ENCODE measurements at regions of chr7 and their contacts with region 1.

Region 1: DNA sequence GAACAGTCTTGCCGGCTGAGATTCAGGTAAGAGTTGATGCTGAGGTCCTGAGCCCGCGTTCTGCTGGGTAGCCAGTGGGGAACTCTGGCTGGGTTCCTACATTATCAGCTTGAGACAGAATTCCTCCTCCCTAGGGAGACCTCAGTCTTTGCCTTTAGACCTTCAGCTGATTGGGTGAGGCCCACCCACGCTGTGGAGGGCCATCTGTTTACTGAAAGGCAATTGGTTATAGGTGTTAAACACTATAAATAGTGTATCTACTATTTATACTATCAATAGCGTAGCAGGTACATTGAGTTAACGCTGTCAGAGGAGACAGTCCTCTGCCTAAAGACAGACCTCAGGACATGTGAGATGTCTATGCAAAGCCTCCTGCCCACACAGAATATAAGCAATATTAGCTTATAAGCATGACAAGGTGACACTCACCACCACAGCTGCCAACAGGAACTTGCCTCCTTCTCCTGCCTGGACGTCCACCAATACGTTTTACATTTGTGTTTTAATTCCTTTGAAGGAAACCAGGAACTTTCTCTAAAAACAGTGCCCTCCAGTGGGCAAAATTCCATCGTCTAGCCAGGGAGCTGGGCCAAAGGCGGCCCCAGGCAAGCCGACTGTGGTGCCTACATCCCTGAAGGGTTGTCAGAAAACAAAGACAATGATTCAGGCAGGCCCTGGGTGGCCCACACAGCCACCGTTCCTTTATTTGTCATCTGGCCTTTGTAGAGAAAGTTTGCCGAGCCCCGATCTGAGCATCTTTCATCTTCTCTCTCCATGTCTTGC is 58.8 kb downstream of the INSIG1 start:
- DNase-seq: peak in 1 of 2 donors; percentile 51
- H3K4me3 ChIP-seq: no peak overlapping the region
- H3K27ac ChIP-seq: no peak overlapping the region
- H3K4me1 ChIP-seq: no peaks in the 10 kb centered on the region
- H3K27me3 ChIP-seq: peaks cover 0 to 81% of the 10 kb centered on the region in 2 donors
- CTCF ChIP-seq: no peak
- POLR2A ChIP-seq: no peak

Region 2: GRCh38 chr7:154927624-154928143 is 428.8 kb before region 1 on chr7:
- intact Hi-C with region 1: loop called (anchors 10 kb)
- DNase-seq: peak in 1 of 2 donors; percentile 84
- H3K4me3 ChIP-seq: peak overlapping the region; percentile 60 to 79 (median 65)
- H3K27ac ChIP-seq: peak overlapping the region; percentile 95
- H3K4me1 ChIP-seq: no peaks in the 10 kb centered on the region
- H3K27me3 ChIP-seq: no peaks in the 10 kb centered on the region
- CTCF ChIP-seq: peak; percentile 9 to 70 (median 70)
- POLR2A ChIP-seq: no peak

Region 3: GRCh38 chr7:155188821-155189581 is 167.5 kb before region 1 on chr7:
- intact Hi-C with region 1: loop called (anchors 10 kb)
- DNase-seq: no peak
- H3K4me3 ChIP-seq: no peak overlapping the region
- H3K27ac ChIP-seq: no peak overlapping the region
- H3K4me1 ChIP-seq: no peaks in the 10 kb centered on the region
- H3K27me3 ChIP-seq: no peaks in the 10 kb centered on the region
- CTCF ChIP-seq: no peak
- POLR2A ChIP-seq: no peak

Region 4: DNA sequence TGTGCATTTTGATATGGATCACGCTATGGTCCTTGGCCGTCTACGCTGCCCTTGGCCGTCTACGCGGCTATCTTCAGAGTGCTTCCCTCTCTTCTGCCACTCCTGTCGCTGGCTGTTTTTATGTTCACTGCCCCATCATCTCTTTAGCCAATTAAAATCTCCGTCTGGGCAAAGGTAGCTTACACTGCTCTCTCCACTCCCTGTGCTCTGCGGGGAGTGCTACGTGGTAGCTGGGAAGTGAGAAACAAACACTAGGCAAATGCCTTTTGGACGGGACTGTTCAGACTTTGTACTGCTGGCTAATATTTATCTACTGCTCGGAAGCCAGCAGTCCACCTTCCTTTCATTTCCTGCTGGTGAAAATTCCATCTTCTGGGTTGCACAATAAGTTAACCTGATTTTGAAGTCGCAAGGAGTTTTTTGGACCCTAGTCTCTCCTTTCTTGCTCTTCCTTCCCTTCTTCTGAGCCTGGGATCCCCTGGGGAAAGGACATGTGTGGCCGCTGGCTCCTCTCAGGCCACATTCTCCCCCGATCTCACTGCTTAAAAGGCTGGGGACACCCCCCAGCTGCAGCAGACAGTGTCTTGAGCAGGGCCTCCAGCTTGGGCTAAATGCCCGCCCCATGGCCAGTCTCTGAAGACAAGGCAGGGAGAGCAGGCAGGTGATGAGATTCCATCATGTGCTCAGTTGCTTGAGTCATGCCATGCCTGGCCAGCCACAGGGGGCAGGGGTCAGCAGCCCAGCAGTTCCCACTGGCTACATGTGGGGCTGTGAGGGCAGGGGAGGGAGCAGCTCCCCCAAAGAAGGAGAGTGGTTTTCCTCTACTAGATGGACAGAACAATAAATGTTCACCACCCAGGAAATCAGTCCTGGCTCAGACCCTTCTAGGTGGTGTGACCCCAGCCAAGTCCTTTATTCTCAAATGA is 262.5 kb after region 1 on chr7:
- intact Hi-C with region 1: no loop called
- DNase-seq: no peak
- H3K4me3 ChIP-seq: no peak overlapping the region
- H3K27ac ChIP-seq: no peak overlapping the region
- H3K4me1 ChIP-seq: no peaks in the 10 kb centered on the region
- H3K27me3 ChIP-seq: no peaks in the 10 kb centered on the region
- CTCF ChIP-seq: no peak
- POLR2A ChIP-seq: no peak

Measured in breast epithelium (tissue), 4 donors.